Activated naive CD4-positive, alpha-beta T cell treated with anti-CD3 and anti-CD28 coated beads for 36 hours (primary cell): ENCODE measurements at regions of chr22 and their contacts with region 1.

Region 1: DNA sequence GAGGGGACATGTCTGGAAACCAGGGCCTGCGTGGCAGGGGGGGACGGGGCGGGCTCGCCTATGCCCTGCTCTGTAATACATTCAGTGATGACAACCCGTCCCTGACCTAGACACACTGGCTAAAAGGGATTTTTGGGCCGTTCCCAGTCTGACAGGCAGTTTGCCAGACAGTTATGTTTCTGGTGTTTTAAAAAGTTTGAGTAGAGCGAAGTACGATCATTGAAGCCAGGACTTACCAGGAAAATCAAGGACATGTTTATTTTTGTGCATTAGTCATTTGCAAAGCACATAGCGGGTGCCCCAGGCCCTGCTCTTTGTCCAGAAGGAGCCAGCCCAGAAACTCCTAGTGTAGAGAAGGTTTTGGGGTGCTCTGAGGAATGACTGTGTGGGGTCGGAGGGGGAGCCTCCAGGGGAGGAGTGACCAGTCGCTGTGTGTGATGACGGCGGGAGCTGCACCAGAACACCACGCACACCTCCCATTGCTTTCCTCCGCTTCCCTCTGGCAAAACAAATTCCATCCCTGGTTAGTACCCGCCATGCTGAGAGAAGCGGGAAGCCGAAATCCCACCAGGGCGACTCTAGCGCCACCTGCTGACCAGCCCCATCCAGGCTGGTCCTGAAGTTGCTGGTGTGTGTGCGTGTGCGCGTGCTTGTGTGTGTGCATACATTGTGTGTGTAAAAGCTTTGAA is 50.8 kb downstream of the FBLN1 start:
- DNase-seq: peak; percentile 73
- H3K4me3 Mint-ChIP-seq: no peak overlapping the region
- H3K27ac Mint-ChIP-seq: no peak overlapping the region
- H3K4me1 Mint-ChIP-seq: peaks cover 1% of the 10 kb centered on the region
- H3K27me3 Mint-ChIP-seq: peaks cover 6% of the 10 kb centered on the region

Region 2: GRCh38 chr22:45441138-45441537 is 112.4 kb before region 1 on chr22:
- CTCF ChIA-PET with region 1: interaction called, 3 read pairs
- intact Hi-C with region 1: loop called (anchors 1 kb)
- DNase-seq: peak; percentile 59
- H3K4me3 Mint-ChIP-seq: peak overlapping the region; percentile 53
- H3K27ac Mint-ChIP-seq: no peak overlapping the region
- H3K4me1 Mint-ChIP-seq: peaks cover 10% of the 10 kb centered on the region
- H3K27me3 Mint-ChIP-seq: peaks cover 2% of the 10 kb centered on the region

Region 3: GRCh38 chr22:45531441-45532238 is 21.9 kb before region 1 on chr22:
- CTCF ChIA-PET with region 1: no interaction called
- intact Hi-C with region 1: no loop called
- DNase-seq: no peak
- H3K4me3 Mint-ChIP-seq: no peak overlapping the region
- H3K27ac Mint-ChIP-seq: no peak overlapping the region
- H3K4me1 Mint-ChIP-seq: no peaks in the 10 kb centered on the region
- H3K27me3 Mint-ChIP-seq: no peaks in the 10 kb centered on the region

Region 4: GRCh38 chr22:46829941-46830715 is 1276.6 kb after region 1 on chr22:
- CTCF ChIA-PET with region 1: no interaction called
- intact Hi-C with region 1: no loop called
- DNase-seq: no peak
- H3K4me3 Mint-ChIP-seq: no peak overlapping the region
- H3K27ac Mint-ChIP-seq: no peak overlapping the region
- H3K4me1 Mint-ChIP-seq: peaks cover 11% of the 10 kb centered on the region
- H3K27me3 Mint-ChIP-seq: no peaks in the 10 kb centered on the region